ENCODE measurements at regions of chr10 and their contacts with region 1.

Region 1: DNA sequence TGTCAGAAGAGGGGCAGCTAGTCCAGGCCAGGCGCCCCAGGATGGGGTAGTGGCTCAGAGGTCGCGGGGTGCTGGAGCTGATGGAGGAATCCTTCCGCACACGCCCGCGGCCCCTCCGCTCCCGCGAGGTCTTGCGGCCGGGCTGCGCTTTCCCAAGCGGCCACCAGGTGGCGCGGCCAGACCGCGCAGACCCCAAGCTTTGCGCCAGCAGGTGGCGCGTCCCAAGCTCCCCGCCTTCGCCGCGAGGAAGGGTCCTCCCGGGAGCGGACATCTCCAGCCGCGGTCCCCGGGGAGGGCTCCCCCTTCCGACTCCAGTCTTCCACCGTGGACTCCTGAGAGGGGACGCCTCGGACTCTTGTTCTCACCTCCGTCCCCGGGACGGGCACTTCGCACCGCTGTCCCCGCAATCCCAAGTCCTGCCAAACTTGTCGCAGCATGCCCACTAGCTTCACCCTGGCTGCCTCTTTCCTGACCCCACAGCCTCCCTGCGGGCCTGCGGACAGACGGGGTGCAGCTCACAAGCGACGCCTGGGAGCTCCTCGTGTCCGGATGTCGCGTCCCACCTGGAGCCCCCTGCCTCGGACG is 19.4 kb downstream of the KCNK18 start:
- DNase-seq: no peak
- H3K4me3 ChIP-seq: peak overlapping the region; percentile 49 to 61 (median 56)
- H3K27ac ChIP-seq: no peak overlapping the region
- H3K4me1 ChIP-seq: peaks cover 12 to 17% (median 15%) of the 10 kb centered on the region in 4 donors
- H3K27me3 ChIP-seq: peaks cover 0 to 80% (median 14%) of the 10 kb centered on the region in 4 donors
- CTCF ChIP-seq: peak in 2 of 3 experiments; percentile 97 to 99
- EP300 ChIP-seq: no peak
- POLR2A ChIP-seq: no peak

Region 2: DNA sequence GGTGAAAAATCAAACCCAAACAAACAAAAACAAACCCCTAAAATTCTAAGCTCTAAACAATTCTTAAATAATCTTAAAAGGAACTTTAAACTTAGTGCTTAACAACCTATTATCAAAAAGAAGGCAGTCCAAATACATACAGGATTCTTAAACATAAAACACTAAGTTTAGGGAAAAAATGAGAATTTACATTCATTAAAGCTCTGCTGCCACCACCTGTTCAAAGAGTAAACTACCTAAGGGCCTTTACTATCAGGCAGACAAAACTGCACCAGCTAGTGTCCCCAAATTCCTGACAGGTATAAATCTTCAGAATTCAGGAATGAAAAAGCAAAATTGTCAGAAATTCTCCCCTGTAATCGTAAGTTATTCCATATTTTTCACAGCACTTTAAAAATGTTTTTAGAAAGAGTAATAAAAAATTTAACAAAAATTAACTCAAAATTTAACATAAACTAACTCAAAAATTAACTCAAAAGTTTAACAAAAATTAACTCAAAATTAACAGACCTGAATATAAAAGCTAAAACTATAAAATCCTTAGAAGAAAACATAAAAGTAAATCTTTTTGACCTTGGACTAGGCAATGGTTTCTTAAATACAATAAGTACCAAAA is 103.5 kb after region 1 on chr10:
- intact Hi-C with region 1: loop called (anchors 2 kb)
- DNase-seq: no peak
- H3K4me3 ChIP-seq: no peak overlapping the region
- H3K27ac ChIP-seq: no peak overlapping the region
- H3K4me1 ChIP-seq: peaks cover 0 to 14% (median 8%) of the 10 kb centered on the region in 4 donors
- H3K27me3 ChIP-seq: no peaks in the 10 kb centered on the region
- CTCF ChIP-seq: peak; percentile 31 to 54 (median 50)
- EP300 ChIP-seq: no peak
- POLR2A ChIP-seq: no peak

Region 3: GRCh38 chr10:117431160-117431559 is 214.5 kb after region 1 on chr10:
- intact Hi-C with region 1: loop called (anchors 10 kb)
- DNase-seq: no peak
- H3K4me3 ChIP-seq: no peak overlapping the region
- H3K27ac ChIP-seq: no peak overlapping the region
- H3K4me1 ChIP-seq: no peaks in the 10 kb centered on the region
- H3K27me3 ChIP-seq: peaks cover 0 to 51% (median 0%) of the 10 kb centered on the region in 4 donors
- CTCF ChIP-seq: no peak
- EP300 ChIP-seq: no peak
- POLR2A ChIP-seq: no peak

Measured in esophagus muscularis mucosa (tissue), 4 donors.